Heart left ventricle (tissue), 16 donors: ENCODE measurements at regions of chr7 and their contacts with region 1.

Region 1: GRCh38 chr7:77315182-77315591 is 101.0 kb downstream of the GSAP start:
- DNase-seq: peak in 1 of 5 donors; percentile 29
- ATAC-seq: peak in 3 of 4 donors; percentile 38 to 80 (median 60)
- H3K4me3 ChIP-seq: no peak overlapping the region
- H3K27ac ChIP-seq: no peak overlapping the region
- H3K4me1 ChIP-seq: peaks cover 0 to 25% (median 3%) of the 10 kb centered on the region in 12 donors
- H3K27me3 ChIP-seq: no peaks in the 10 kb centered on the region
- CTCF ChIP-seq: no peak
- POLR2A ChIP-seq: no peak

Region 2: DNA sequence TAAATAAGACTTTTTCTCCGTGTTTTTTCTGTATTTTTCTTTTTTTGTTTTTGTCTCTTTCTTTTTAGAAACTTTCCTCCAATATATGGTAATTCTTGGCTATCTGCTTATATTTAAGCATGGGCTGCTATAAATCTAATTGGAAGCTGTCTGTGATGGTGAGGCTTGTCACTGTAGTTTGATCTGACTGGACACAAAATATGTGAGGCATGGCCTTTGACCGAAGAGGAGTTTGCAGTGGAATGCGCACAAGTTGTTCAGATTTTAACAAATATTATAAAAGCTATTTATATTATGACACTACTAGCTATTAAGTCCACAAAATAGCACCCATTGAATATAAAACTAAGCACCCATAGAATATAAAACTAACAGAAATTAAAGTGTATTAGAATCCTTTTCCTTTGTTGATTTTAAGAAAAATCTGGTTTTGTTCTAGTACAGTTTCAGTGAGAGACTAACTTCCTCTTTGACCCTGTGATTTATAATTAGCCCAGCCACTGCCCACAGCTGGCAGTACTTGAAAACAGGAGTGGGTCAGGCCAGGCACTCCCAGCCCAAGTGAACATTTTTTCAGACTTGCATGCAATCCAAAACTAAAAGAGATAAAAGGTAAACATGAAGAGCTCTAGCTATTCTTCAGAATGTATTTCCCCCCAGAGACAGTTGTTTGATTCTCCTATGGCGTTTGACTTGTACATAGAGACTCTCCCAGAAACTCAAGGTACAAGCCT is 45.7 kb before region 1 on chr7:
- intact Hi-C with region 1: loop called in 1 of 10 experiments (anchors 5 kb)
- DNase-seq: peak in 2 of 5 donors; percentile 32 to 44
- ATAC-seq: peak; percentile 65 to 82 (median 75)
- H3K4me3 ChIP-seq: no peak overlapping the region
- H3K27ac ChIP-seq: peak overlapping the region in 10 of 12 donors; percentile 16 to 61 (median 32)
- H3K4me1 ChIP-seq: peaks cover 0 to 14% (median 10%) of the 10 kb centered on the region in 12 donors
- H3K27me3 ChIP-seq: no peaks in the 10 kb centered on the region
- CTCF ChIP-seq: no peak
- POLR2A ChIP-seq: no peak

Region 3: DNA sequence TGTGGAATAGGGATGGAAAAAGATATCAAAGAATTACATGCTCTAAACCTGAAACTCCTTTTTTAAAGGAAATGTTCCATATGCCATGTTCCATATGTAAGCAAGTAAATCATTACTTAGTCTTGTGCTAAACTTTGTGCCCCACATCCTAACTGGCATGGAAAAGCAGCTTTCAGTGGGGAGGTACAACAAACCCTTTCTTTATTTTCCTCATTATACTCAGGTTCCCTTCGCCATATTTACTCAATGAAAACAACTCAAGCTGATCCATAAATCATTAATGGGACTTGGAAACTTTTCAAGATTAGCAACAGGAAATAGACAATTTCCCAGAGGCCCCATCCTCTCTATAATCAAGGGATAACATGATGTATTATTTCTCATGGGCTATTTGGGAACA is 44.9 kb after region 1 on chr7:
- intact Hi-C with region 1: no loop called
- DNase-seq: no peak
- ATAC-seq: no peak
- H3K4me3 ChIP-seq: no peak overlapping the region
- H3K27ac ChIP-seq: peak overlapping the region in 3 of 12 donors; percentile 2 to 35 (median 6)
- H3K4me1 ChIP-seq: peaks cover 0 to 4% (median 0%) of the 10 kb centered on the region in 12 donors
- H3K27me3 ChIP-seq: no peaks in the 10 kb centered on the region
- CTCF ChIP-seq: no peak
- POLR2A ChIP-seq: no peak

Region 4: GRCh38 chr7:77802557-77803405 is 487.6 kb after region 1 on chr7:
- intact Hi-C with region 1: no loop called
- DNase-seq: no peak
- ATAC-seq: no peak
- H3K4me3 ChIP-seq: no peak overlapping the region
- H3K27ac ChIP-seq: peak overlapping the region in 1 of 12 donors; percentile 66
- H3K4me1 ChIP-seq: peaks cover 0 to 46% (median 11%) of the 10 kb centered on the region in 12 donors
- H3K27me3 ChIP-seq: no peaks in the 10 kb centered on the region
- CTCF ChIP-seq: no peak
- POLR2A ChIP-seq: no peak

Region 5: DNA sequence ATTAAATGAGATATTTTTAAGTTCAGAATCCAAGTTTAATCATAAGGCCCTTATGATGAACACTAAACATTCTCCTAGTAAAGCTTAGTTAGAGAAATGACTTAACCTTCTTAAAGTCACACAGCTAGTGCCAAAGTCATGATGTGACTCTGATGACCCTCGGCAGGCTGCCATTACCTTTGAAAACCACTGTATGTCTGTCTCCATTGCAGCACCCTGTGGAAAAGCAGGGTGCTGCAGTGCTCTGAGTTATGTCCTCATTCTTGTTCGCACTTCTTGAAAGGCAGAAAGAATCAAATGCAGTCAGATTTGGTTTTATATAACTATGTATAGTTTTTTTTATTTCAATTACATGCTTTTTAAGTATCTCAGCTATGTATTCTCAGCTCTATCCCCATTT is 588.4 kb after region 1 on chr7:
- intact Hi-C with region 1: no loop called
- DNase-seq: peak in 2 of 5 donors; percentile 32 to 37
- ATAC-seq: peak in 1 of 4 donors; percentile 63
- H3K4me3 ChIP-seq: no peak overlapping the region
- H3K27ac ChIP-seq: peak overlapping the region in 1 of 12 donors; percentile 3
- H3K4me1 ChIP-seq: peaks cover 0 to 8% (median 0%) of the 10 kb centered on the region in 12 donors
- H3K27me3 ChIP-seq: no peaks in the 10 kb centered on the region
- CTCF ChIP-seq: peak in 3 of 12 donors; percentile 22 to 31 (median 26)
- POLR2A ChIP-seq: no peak